Ascending aorta (tissue), 2 donors: ENCODE measurements at regions of chr5 and their contacts with region 1.

Region 1: DNA sequence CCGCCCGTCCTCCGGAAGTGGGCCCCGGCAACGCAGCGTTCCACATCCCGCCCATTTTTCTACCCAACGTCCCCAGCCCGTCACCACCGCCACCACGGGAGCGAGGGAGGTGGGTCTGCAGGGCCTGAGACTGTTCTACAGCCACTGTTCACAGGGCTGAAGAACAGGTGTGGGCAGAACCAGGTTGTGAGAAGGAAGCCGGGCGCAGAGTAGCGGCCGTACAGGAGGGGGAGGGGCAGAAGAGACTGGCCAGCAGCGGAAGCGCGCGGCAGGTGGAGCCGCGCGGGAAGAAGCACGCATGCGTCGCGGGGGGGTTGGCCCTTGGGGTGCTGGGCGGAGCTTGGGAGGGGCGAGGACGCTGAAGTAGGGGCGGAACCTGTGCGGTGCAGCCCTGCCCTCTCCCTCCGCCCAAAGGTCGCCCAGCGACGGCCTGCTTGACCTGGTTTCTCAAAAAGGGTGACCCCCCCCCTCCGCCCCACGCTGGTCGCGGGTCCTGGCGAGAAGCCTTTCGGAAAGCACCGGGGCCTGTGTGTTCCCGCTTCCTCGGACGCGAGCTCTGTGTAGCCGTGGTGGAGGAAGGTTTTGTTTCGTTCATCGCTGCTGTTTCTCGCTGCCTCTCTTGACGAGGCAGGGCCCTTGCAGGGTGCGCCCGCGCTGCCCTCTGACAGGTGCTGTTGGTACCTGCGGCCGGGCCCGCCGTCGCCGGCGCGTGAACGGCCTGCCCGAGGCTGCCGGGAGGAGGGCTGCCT is 7.8 kb upstream of the MGAT1 start:
- DNase-seq: peak; percentile 79 to 96
- H3K4me3 ChIP-seq: peak overlapping the region; percentile 70 to 76
- H3K27ac ChIP-seq: peak overlapping the region; percentile 93 to 97
- H3K4me1 ChIP-seq: peaks cover 14 to 40% of the 10 kb centered on the region in 2 donors
- H3K27me3 ChIP-seq: no peaks in the 10 kb centered on the region
- CTCF ChIP-seq: no peak

Region 2: GRCh38 chr5:179623003-179623880 is 1187.1 kb before region 1 on chr5 and contains the start of gene HNRNPH1:
- intact Hi-C with region 1: loop called (anchors 10 kb)
- DNase-seq: peak; percentile 93 to 99
- H3K4me3 ChIP-seq: peak within 1 kb of the TSS; percentile 99 to 100
- H3K27ac ChIP-seq: peak within 1 kb of the TSS; percentile 100
- H3K4me1 ChIP-seq: peaks cover 0 to 40% of the 10 kb centered on the region in 2 donors
- H3K27me3 ChIP-seq: no peaks in the 10 kb centered on the region
- CTCF ChIP-seq: peak in 1 of 3 experiments; percentile 5
- total RNA-seq, gene HNRNPH1: 206 TPM

Region 3: GRCh38 chr5:180291943-180292831 is 518.2 kb before region 1 on chr5 and contains the start of gene MAPK9:
- intact Hi-C with region 1: loop called (anchors 10 kb)
- DNase-seq: peak in 1 of 2 donors; percentile 89
- H3K4me3 ChIP-seq: peak within 1 kb of the TSS; percentile 84 to 88
- H3K27ac ChIP-seq: peak within 1 kb of the TSS; percentile 73 to 88
- H3K4me1 ChIP-seq: peaks cover 3 to 13% of the 10 kb centered on the region in 2 donors
- H3K27me3 ChIP-seq: no peaks in the 10 kb centered on the region
- CTCF ChIP-seq: no peak
- total RNA-seq, gene MAPK9: 12.9 TPM

Region 4: DNA sequence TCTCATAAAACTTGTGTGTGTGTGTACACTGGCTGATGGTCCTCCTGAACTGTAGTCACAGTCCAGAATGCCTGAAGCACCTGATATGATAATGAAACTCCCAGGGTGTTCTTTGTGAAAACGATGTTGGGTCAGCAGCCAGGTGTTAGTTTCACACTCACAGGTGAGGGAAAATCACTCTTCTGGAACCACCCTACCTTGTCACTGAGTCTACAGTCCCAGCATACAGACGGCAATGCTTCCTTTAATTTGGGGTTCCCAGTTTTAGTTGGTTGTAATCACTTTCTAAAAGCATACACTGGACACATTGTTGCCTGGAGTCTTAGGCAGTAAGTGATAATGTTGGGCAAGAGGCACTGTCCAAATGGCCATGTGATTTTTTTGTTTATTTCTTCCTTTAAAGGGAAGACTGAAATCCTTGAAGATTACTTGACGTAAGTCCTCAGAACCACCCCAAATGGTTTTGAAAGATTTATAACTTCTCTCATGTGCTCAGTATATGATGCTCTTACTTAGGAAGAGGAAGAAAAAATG is 10.5 kb after region 1 on chr5:
- intact Hi-C with region 1: no loop called
- DNase-seq: peak in 1 of 2 donors; percentile 61
- H3K4me3 ChIP-seq: no peak overlapping the region
- H3K27ac ChIP-seq: peak overlapping the region; percentile 63 to 69
- H3K4me1 ChIP-seq: peaks cover 2 to 39% of the 10 kb centered on the region in 2 donors
- H3K27me3 ChIP-seq: no peaks in the 10 kb centered on the region
- CTCF ChIP-seq: no peak

Region 5: DNA sequence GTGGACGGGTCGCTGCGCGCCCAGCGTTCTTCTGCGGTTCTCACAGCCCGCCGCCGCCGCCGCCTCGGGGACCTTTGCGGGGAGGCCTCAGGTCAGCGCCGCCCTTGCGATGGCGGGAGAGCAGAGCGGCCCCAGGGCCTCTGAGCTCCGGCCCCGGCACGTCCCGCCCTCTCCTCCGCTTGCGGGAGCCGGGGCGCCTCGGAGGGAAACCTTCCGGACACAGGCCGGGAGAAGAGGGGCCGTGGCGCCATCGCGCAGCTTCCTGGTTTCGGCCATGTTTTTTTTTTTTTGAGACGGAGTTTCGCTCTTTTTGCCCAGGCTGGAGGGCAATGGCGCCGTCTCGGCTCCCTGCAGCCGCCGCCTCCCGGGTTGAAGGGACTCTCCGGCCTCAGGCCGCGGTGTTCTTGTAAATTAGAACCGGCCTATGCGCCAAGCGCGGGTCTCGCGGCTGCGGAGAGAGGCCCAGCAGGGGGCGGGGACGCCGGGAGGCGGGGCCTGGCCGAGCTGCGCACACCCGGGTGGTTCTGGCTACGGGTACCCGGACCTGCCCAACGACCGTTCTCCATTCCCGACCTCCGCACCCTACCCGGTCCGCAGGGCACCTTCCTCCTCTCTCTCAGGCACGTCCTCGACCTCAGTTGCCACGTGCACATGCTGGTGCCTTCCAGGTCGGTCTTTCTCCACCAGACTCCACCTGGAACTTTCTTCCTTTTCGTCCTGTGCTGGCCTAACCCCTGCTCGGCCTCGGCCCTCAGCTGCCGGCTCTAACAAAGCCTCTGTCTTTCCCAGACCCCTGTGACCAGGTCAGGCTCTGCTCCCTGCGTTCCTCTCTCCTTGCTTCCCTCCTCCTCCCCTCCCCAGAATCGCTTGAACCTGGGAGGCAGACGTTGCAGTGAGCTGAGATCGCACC is 21.0 kb after region 1 on chr5:
- intact Hi-C with region 1: loop called (anchors 1 kb)
- DNase-seq: peak; percentile 55 to 89
- H3K4me3 ChIP-seq: peak overlapping the region; percentile 92 to 95
- H3K27ac ChIP-seq: peak overlapping the region; percentile 97
- H3K4me1 ChIP-seq: peaks cover 4 to 18% of the 10 kb centered on the region in 2 donors
- H3K27me3 ChIP-seq: no peaks in the 10 kb centered on the region
- CTCF ChIP-seq: peak in 2 of 3 experiments; percentile 7 to 9

Region 6: DNA sequence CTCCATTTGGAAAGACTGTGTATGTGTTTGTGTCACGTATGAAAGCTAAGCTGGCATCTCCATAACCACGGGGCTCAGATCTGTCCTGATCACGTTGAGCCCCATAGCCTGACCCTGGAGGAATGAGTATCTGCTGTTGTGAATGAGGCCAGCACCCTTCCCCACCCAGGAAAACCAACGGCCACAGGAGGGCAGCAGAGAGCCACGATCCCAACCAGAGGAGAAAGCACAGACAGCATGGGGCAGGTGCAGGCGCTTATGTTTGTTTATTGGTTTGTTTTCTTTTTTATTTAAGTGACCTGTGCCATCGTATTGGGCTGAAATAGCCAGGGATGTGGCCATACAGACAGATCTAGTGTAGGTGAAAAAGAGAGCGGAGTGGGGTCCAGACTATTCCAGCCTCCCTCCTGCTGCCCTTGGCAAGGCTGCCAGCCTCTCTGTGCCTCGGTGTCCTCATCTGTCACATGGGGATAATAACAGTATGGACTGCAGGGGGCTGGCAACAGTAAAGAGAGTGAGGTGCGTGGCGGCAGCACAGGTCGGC is 349.0 kb after region 1 on chr5:
- intact Hi-C with region 1: loop called (anchors 5 kb)
- DNase-seq: peak in 1 of 2 donors; percentile 89
- H3K4me3 ChIP-seq: no peak overlapping the region
- H3K27ac ChIP-seq: no peak overlapping the region
- H3K4me1 ChIP-seq: peaks cover 0 to 3% of the 10 kb centered on the region in 2 donors
- H3K27me3 ChIP-seq: no peaks in the 10 kb centered on the region
- CTCF ChIP-seq: peak; percentile 70 to 83 (median 75)

Region 7: GRCh38 chr5:181260387-181261319 is 450.3 kb after region 1 on chr5 and contains the start of gene TRIM52:
- intact Hi-C with region 1: loop called (anchors 5 kb)
- DNase-seq: peak; percentile 56 to 95
- H3K4me3 ChIP-seq: peak within 1 kb of the TSS; percentile 74 to 99
- H3K27ac ChIP-seq: peak within 1 kb of the TSS; percentile 97 to 100
- H3K4me1 ChIP-seq: peaks cover 2 to 27% of the 10 kb centered on the region in 2 donors
- H3K27me3 ChIP-seq: no peaks in the 10 kb centered on the region
- CTCF ChIP-seq: peak in 1 of 3 experiments; percentile 9
- total RNA-seq, gene TRIM52: 21.2 TPM